GM18951 (cell line): ENCODE measurements at regions of chr10 and their contacts with region 1.

Region 1: GRCh38 chr10:87861953-87862678 is 1.2 kb downstream of the KLLN start:
- POLR2A ChIP-seq: peak; percentile 84

Region 2: DNA sequence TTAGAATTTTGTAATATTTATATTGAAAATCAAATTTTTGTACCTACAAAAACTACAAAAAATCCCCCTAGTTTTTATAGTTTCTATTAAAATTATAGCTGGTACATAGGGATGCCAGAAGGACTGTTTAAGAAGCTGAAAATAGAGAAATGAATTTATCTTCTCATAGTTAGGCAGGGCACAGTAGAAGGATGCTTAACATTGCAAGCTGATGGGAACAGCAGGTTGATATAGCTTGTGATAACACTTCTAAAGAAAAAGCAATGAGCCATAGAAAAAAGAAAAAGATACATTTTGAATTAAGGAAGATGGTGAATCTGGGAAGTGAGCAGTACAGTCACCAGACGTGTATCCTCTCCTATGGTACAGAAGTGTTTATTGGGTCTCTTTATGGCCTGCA is 33.3 kb after region 1 on chr10:
- in situ Hi-C with region 1: no loop called
- POLR2A ChIP-seq: no peak

Region 3: GRCh38 chr10:88091490-88092105 is 229.5 kb after region 1 on chr10:
- in situ Hi-C with region 1: loop called (anchors 10 kb)
- POLR2A ChIP-seq: no peak

Region 4: DNA sequence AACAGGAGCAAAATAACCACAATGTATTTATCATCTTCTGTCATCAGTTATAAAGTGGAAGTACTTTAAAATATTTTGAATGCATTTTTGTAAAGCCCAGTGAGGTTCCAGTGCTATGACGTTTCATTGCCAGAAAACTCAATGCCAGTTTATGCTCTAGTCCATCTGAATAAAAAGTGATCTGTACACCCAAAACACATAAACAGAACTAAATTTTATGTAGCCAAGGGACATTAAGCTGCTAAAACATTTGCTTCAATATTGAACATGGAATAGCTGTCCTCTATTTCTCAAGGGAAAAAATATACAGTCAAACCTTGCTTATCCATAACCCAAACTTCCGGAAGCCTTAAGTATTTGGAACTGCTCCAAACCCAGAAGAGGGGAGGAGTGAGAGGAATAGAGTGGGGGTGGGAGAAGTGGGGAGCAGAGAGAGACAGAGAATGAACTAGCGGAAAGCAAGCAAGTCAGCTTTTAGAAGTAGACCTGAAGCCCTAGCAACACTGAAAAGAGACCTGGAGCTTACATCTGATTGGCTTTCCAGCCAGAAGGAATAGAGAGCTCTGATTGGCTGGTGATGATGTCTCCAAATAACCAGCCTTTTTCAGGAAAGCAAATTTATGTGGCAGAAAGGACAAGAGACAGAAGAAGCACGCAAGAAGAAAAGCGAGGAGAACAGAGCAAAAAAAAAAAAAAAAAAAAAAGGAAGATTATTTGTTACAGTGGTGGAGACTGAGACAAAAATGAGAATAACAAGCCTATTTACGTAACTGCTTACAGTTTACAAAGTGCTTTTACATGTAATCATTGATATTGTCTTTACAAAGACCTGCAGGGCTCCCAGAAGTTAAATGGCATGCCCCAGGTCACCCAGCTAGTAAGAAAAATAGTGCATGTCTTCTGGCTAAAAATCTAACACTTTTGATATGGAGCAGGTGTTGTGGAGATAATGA is 525.0 kb after region 1 on chr10:
- in situ Hi-C with region 1: loop called (anchors 10 kb)
- POLR2A ChIP-seq: no peak